ENCODE measurements at regions of chr9 and their contacts with region 1.

Region 1: DNA sequence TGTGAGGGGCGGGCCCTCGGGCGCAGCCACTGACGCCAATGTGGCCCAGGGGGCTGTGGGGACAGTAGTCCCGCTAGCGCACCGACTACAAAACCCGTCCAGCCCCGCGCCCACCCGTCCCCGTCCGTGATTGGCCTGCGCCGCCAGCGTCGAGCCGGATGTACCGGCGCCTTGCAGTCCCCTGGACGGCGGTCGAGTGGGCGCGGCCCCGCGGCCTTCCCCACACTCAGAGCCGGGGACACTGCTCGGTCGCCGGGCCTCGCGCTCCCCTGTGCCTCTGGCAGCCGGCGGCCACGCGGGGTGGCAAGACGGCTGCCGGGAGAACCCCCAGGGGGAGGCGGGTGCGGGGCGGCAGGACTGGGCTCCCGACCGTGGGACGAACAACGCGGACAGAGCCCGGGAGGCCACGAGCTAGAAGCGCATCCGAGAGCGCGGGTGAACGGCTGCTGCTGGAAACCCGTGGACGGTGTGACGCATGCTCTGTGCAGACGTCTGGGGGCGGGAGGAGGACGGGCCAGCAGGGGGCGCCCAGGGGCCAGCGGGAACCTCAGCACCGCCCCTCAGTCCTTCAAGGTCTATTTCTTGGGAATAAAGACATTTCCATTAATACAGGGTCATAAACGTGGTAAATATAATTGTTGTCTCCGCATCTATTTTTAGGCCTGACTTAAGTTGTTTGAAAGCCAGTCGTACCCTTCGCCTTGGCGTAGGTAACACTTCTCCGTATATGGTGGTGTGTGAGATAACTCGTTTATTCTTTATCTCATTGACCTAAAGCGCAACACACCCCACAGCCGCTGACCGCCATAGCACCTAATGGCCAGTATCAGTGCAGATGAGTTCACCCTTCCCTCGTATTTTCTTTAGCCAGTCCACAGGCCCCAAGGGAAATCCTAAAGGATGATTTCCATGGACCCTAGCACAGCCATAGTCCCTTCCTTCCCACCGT is 629 bp upstream of the BICD2 start:
- DNase-seq: peak; percentile 99
- ATAC-seq: peak; percentile 95 to 96 (median 96)
- H3K4me3 ChIP-seq: peak overlapping the region; percentile 95
- H3K27ac ChIP-seq: peak overlapping the region; percentile 99
- H3K4me1 ChIP-seq: peaks cover 42% of the 10 kb centered on the region
- H3K27me3 ChIP-seq: no peaks in the 10 kb centered on the region
- CTCF ChIP-seq: peak; percentile 94

Region 2: GRCh38 chr9:92278110-92278509 is 487.2 kb before region 1 on chr9:
- intact Hi-C with region 1: no loop called
- DNase-seq: no peak
- ATAC-seq: no peak
- H3K4me3 ChIP-seq: no peak overlapping the region
- H3K27ac ChIP-seq: no peak overlapping the region
- H3K4me1 ChIP-seq: no peaks in the 10 kb centered on the region
- H3K27me3 ChIP-seq: no peaks in the 10 kb centered on the region
- CTCF ChIP-seq: no peak

Region 3: DNA sequence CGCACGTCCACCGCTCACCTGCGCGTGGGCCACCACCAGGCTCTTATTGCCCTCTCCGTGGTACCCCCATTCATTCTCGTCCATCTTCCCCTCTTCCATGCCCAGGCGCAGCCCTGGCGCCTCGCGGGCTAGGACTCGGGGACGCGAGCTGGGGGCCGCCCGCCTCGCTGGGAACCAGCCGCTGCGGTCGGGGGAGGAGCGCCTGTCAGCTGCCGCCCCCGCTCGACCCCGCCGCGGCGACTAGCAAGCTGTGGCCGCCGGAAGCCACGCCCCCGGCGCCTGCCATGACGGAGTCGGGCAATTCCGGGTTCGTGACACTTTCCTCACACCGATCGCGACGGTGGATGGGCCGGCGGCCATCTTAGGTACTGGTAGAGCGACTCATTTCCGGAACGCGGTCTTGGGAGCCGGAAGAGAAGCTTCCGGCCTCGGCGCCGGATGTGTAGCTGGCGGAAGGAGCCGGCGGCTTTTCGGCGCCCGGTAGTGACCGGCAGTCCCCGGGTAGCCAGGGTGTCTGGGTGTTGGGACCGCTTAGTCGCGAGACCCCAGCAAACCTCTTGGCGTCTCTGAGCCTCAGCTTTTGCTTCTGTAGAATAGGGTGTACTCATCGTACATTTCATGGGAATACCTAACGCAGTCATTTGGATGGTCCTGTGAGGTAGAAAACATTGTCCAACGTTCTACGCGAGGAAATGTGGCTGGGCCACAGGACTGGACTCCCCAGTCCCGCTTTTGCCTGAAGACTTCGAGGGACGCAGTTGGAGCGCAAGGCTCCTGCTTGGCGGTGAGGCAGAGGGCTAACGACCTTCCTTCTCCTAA is 95.2 kb before region 1 on chr9 and contains the start of gene IPPK:
- intact Hi-C with region 1: loop called (anchors 2 kb)
- DNase-seq: peak; percentile 99
- ATAC-seq: peak; percentile 97 to 98 (median 97)
- H3K4me3 ChIP-seq: peak within 1 kb of the TSS; percentile 99
- H3K27ac ChIP-seq: peak within 1 kb of the TSS; percentile 97
- H3K4me1 ChIP-seq: peaks cover 27% of the 10 kb centered on the region
- H3K27me3 ChIP-seq: no peaks in the 10 kb centered on the region
- CTCF ChIP-seq: no peak
- total RNA-seq, gene IPPK: 3.9 to 9.9 (median 8.0) TPM

Region 4: GRCh38 chr9:92820964-92821363 is 55.7 kb after region 1 on chr9:
- intact Hi-C with region 1: no loop called
- DNase-seq: no peak
- ATAC-seq: no peak
- H3K4me3 ChIP-seq: no peak overlapping the region
- H3K27ac ChIP-seq: no peak overlapping the region
- H3K4me1 ChIP-seq: no peaks in the 10 kb centered on the region
- H3K27me3 ChIP-seq: peaks cover 0 to 7% (median 0%) of the 10 kb centered on the region in 3 donors
- CTCF ChIP-seq: no peak